WTC11 (cell line): ENCODE measurements at regions of chr5 and their contacts with region 1.

Region 1: GRCh38 chr5:108260117-108260857 is 121.6 kb downstream of the FBXL17 start:
- DNase-seq: peak; percentile 79
- ATAC-seq: peak; percentile 95
- H3K4me3 Mint-ChIP-seq: no peak overlapping the region
- H3K27ac Mint-ChIP-seq: peak overlapping the region; percentile 48; the same call in 1 of the 2 replicates
- H3K4me1 Mint-ChIP-seq: peaks cover 17% of the 10 kb centered on the region
- H3K27me3 Mint-ChIP-seq: no peaks in the 10 kb centered on the region
- CTCF ChIP-seq: peak; percentile 78

Region 2: GRCh38 chr5:108168915-108169314 is 91.4 kb before region 1 on chr5:
- CTCF ChIA-PET with region 1: no interaction called
- POLR2A ChIA-PET with region 1: no interaction called
- DNase-seq: no peak
- ATAC-seq: no peak
- H3K4me3 Mint-ChIP-seq: no peak overlapping the region
- H3K27ac Mint-ChIP-seq: no peak overlapping the region
- H3K4me1 Mint-ChIP-seq: no peaks in the 10 kb centered on the region
- H3K27me3 Mint-ChIP-seq: no peaks in the 10 kb centered on the region
- CTCF ChIP-seq: no peak

Region 3: GRCh38 chr5:108295578-108296368 is 35.5 kb after region 1 on chr5:
- CTCF ChIA-PET with region 1: interaction called, 12 read pairs
- POLR2A ChIA-PET with region 1: no interaction called
- DNase-seq: no peak
- ATAC-seq: no peak
- H3K4me3 Mint-ChIP-seq: no peak overlapping the region
- H3K27ac Mint-ChIP-seq: peak overlapping the region; percentile 75; the same call in 1 of the 2 replicates
- H3K4me1 Mint-ChIP-seq: peaks cover 6% of the 10 kb centered on the region; the same call in 1 of the 2 replicates
- H3K27me3 Mint-ChIP-seq: no peaks in the 10 kb centered on the region
- CTCF ChIP-seq: no peak

Region 4: GRCh38 chr5:108345541-108346171 is 85.4 kb after region 1 on chr5:
- CTCF ChIA-PET with region 1: interaction called, 20 read pairs
- POLR2A ChIA-PET with region 1: interaction called, 3 read pairs
- DNase-seq: no peak
- ATAC-seq: no peak
- H3K4me3 Mint-ChIP-seq: no peak overlapping the region
- H3K27ac Mint-ChIP-seq: no peak overlapping the region
- H3K4me1 Mint-ChIP-seq: no peaks in the 10 kb centered on the region
- H3K27me3 Mint-ChIP-seq: no peaks in the 10 kb centered on the region
- CTCF ChIP-seq: no peak